Activated CD4-positive, alpha-beta T cell treated with anti-CD3 and anti-CD28 coated beads, Interleukin-2, amount 10 ng/mL, durations not matched to agents 24 days and 14 days (primary cell): ENCODE measurements at regions of chr1 and their contacts with region 1.

Region 1: GRCh38 chr1:230753586-230754251 is 6.5 kb downstream of the CAPN9 start:
- DNase-seq: peak; percentile 82
- H3K4me3 Mint-ChIP-seq: peak overlapping the region; percentile 71
- H3K27ac Mint-ChIP-seq: peak overlapping the region; percentile 64
- H3K4me1 Mint-ChIP-seq: peaks cover 4% of the 10 kb centered on the region
- H3K27me3 Mint-ChIP-seq: no peaks in the 10 kb centered on the region

Region 2: DNA sequence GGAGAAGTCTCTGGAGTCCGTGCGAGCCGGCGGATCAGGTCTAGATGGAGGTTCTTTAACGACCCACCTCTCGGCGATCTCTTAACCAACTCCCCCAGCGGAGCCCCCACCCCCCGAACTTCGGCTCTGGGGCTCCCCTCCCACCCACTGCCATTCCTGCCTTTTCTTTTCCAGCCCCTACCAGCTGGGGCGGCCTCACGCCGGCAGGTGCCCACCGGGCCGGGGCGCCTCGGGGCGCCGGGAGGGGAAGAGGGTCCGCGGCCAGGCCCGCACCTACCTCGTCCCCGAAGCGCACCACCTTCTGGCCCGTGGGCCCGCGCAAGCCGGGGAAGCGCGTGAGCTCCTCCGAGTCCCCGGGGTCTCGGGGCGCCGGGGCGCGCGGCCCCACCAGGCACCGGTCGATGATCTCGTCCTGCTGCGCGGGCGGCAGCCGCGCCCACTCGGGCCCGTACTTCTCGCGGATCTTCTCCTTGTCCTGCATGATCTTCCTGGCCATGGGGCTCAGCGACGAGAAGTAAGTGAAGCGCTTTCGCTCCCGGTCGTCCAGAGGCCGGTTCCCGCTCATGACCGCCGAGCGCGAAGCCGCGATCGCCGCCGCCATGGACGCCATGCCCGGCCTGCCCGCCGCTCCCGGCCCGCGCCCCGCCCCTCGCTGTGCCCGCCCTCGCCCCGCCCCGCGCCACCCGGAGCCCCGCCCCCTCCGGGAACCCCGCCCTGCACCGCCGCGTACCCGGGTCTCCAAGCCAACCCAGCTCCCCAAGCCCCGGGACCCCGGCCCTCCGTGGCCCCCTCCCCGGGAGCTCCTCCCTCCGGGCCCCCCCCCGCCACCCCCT is 114.4 kb after region 1 on chr1 and contains the start of gene C1orf198:
- intact Hi-C with region 1: loop called (anchors 10 kb)
- DNase-seq: peak; percentile 91
- H3K4me3 Mint-ChIP-seq: peak within 1 kb of the TSS; percentile 89
- H3K27ac Mint-ChIP-seq: peak within 1 kb of the TSS; percentile 84
- H3K4me1 Mint-ChIP-seq: peaks cover 31% of the 10 kb centered on the region
- H3K27me3 Mint-ChIP-seq: peaks cover 35% of the 10 kb centered on the region
- total RNA-seq, gene C1orf198: 12.4 and 13.7 TPM in 2 replicates

Region 3: GRCh38 chr1:231053493-231054162 is 299.9 kb after region 1 on chr1:
- intact Hi-C with region 1: loop called (anchors 10 kb)
- DNase-seq: peak; percentile 67
- H3K4me3 Mint-ChIP-seq: peak overlapping the region; percentile 54
- H3K27ac Mint-ChIP-seq: peak overlapping the region; percentile 60
- H3K4me1 Mint-ChIP-seq: peaks cover 14% of the 10 kb centered on the region
- H3K27me3 Mint-ChIP-seq: peaks cover 14% of the 10 kb centered on the region